ENCODE measurements at regions of chr9 and their contacts with region 1.

Region 1: GRCh38 chr9:126885131-126885641 is 24.7 kb downstream of the ZBTB34 start:
- DNase-seq: no peak
- ATAC-seq: peak; percentile 37
- H3K4me3 ChIP-seq: no peak overlapping the region
- H3K4me3 Mint-ChIP-seq: no peak overlapping the region
- H3K27ac ChIP-seq: no peak overlapping the region
- H3K27ac Mint-ChIP-seq: no peak overlapping the region
- H3K4me1 ChIP-seq: no peaks in the 10 kb centered on the region
- H3K4me1 Mint-ChIP-seq: peaks cover 0 to 7% (median 2%) of the 10 kb centered on the region in 7 donors
- H3K27me3 ChIP-seq: no peaks in the 10 kb centered on the region
- H3K27me3 Mint-ChIP-seq: no peaks in the 10 kb centered on the region

Region 2: DNA sequence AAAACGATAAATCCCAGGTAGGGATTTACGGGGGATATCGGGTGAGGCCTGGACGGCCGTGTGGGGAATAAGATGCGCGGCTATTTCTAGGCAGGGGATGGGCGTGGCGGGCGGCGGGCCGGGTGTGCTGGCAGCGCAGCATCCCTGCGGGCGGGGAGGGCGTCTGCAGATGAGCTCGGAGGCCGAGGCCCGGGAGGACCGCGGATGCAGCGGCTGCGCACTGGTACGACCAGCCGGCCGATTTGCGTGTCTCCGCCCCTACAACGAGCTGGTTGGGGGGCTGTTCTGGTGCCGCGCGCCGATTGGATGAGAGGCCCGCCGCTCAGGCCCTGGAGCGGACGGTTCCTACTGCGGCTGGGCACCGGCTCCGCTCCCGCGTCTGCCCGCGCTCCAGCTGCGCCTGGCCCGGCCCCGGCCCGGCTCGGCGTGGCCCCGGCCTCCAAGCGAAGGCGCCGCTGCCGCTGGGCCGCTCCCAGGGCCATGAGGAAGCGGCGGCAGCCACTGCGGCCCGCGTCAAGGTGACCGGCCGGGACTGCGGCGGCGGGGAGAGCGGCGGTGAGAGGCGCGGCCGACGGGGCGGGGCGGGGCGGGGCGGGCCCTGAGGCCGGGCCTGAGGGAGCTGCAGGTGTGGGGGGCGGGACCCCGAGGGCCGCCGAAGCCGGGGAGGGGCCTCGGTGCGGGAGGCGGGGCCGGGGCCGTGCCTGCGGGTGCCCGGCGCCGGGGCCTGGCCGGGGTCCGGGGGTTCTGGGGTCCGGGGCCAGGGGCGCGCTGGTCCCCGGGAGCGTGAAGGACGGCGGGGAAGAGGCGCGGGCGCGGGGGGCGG is 29.5 kb after region 1 on chr9 and contains the start of gene RALGPS1:
- CTCF ChIA-PET with region 1: no interaction called
- POLR2A ChIA-PET with region 1: no interaction called
- intact Hi-C with region 1: loop called in 1 of 2 experiments (anchors 2 kb)
- DNase-seq: peak; percentile 68 to 88 (median 81)
- ATAC-seq: peak; percentile 98
- H3K4me3 ChIP-seq: peak within 1 kb of the TSS; percentile 47
- H3K4me3 Mint-ChIP-seq: peak within 1 kb of the TSS; percentile 73 to 90 (median 82)
- H3K27ac ChIP-seq: peak within 1 kb of the TSS; percentile 13
- H3K27ac Mint-ChIP-seq: peak within 1 kb of the TSS in 6 of 9 donors; percentile 14 to 89 (median 75)
- H3K4me1 ChIP-seq: no peaks in the 10 kb centered on the region
- H3K4me1 Mint-ChIP-seq: peaks cover 5 to 13% (median 7%) of the 10 kb centered on the region in 7 donors
- H3K27me3 ChIP-seq: no peaks in the 10 kb centered on the region
- H3K27me3 Mint-ChIP-seq: peaks cover 0 to 36% (median 0%) of the 10 kb centered on the region in 5 donors
- total RNA-seq, gene RALGPS1: 2.6 to 8.3 (median 5.8) TPM

Measured in naive thymus-derived CD4-positive, alpha-beta T cell (primary cell).